HepG2 (cell line): ENCODE measurements at regions of chr5 and their contacts with region 1.

Region 1: DNA sequence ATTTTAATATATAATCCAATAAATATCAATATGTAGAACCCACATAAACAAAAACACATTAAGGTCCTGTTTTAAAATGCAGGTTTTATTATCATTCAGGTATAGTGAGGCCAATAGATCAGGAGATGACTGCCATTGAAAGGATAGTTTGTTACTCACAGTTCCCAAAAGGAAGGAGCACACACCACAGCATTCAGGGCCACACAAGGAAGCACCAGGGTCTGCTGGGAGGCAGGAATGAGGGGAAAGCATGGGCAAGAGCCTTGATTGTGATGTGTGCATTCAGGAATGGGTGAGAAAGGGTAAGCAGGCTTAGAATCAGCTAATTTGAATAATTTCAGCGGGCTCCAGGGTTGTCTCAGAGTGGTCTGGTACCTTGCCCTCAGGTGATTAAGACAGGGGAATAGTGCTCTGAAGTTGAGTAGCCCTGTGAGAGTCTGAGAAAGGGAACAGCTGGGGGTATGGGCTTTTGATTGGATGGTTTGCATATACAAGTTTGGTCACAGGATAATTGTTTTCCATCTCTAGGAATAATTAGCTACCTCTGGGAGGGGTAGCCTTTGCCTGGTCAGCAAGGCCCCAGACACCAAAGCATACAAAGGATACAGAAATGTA is 19.8 kb upstream of the OTULIN start:
- DNase-seq: no peak
- ATAC-seq: no peak
- H3K4me3 ChIP-seq: no peak overlapping the region
- H3K27ac ChIP-seq: no peak overlapping the region
- H3K4me1 ChIP-seq: no peaks in the 10 kb centered on the region
- H3K27me3 ChIP-seq: no peaks in the 10 kb centered on the region; a peak in 1 of 5 replicates
- CTCF ChIP-seq: no peak
- EP300 ChIP-seq: no peak
- POLR2A ChIP-seq: no peak
- RAD21 ChIP-seq: no peak

Region 2: DNA sequence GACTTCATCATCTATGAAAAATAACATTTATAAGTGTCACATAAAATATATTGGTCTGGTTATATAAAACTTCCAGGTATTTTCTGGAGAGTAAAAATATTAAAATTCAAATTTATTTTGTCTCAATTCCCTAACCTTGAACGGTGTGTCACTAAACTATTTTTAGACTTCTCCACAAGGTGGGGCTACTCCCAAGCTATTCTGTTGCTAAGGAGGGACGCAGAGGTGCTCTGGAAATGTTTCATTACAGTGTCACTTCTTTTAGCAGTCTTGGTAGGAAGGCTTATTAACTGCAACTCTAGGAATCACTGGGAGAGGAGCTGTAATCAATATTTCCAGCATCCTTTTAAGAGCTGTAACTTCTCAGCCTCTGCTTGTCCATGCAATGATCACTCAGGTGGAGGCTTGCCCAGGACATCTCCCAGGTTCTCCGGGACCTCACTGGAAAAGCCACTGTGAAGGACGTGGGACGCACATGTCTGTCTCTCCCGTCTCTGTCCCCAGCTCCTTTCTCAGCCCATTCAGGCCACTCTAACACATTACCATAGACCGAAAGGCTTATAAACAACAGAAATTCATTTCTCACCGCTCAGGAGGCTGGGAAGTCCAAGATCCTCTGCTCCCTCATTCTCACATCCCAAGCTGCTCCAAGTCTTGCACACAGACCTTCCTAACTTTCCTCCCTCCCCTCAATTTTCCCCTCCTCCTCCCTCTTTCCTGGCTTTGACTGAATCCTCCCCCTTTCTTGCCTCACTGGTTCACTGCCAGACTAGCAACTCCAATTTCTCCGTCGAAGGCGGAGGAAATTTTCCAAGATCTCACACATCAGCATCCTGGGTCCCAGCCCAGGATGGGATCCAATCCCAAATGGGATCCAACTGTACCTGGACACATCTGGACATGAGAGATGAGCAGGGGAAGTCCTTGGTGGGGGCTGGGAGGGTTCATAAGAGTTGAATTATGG is 667.6 kb before region 1 on chr5:
- CTCF ChIA-PET with region 1: interaction called, 3 read pairs
- POLR2A ChIA-PET with region 1: no interaction called
- in situ Hi-C with region 1: loop called (anchors 10 kb)
- intact Hi-C with region 1: loop called (anchors 2 kb)
- DNase-seq: peak; percentile 15
- ATAC-seq: peak; percentile 91
- H3K4me3 ChIP-seq: no peak overlapping the region
- H3K27ac ChIP-seq: no peak overlapping the region
- H3K4me1 ChIP-seq: no peaks in the 10 kb centered on the region
- H3K27me3 ChIP-seq: peaks cover 0 to 2% of the 10 kb centered on the region in 2 experiments; a peak in 1 of 5 replicates
- CTCF ChIP-seq: peak; percentile 57
- EP300 ChIP-seq: no peak
- POLR2A ChIP-seq: no peak
- RAD21 ChIP-seq: no peak

Region 3: DNA sequence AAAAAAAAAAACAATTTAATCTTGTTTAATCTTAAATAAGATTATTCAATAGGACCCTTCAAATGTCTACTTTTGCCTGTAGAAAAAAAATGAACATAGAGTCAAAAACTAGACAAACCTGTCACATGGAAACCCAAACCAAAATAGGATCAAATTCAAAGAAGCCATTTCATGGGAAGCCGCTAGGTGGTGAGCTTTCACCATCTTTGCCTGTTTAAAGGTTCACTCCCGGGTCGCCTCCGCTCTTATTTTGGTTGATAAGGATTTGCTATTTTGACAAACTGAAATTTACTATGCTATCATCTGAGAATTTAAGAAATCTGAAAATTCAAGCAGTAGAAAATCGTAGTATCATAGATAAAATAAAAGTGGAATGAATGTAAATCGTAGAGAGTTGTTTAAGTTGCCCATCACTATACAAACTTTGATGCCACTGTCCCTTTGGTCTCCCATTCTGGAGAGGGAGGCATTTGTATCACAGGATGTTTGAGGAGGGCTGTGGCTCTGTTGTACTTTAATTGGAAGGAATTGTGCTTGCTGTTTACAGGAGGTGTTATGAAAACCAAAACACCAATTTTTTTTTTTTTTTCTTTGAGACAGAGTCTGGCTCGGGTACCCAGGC is 656.8 kb before region 1 on chr5:
- CTCF ChIA-PET with region 1: no interaction called
- POLR2A ChIA-PET with region 1: no interaction called
- in situ Hi-C with region 1: loop called (anchors 10 kb)
- intact Hi-C with region 1: no loop called
- DNase-seq: peak; percentile 37
- ATAC-seq: peak; percentile 61; the same call in 2 of the 3 replicates
- H3K4me3 ChIP-seq: no peak overlapping the region
- H3K27ac ChIP-seq: no peak overlapping the region
- H3K4me1 ChIP-seq: no peaks in the 10 kb centered on the region
- H3K27me3 ChIP-seq: peaks cover 0 to 4% of the 10 kb centered on the region in 2 experiments; a peak in 1 of 5 replicates
- CTCF ChIP-seq: peak; percentile 76
- EP300 ChIP-seq: no peak
- POLR2A ChIP-seq: no peak
- RAD21 ChIP-seq: peak; percentile 72

Region 4: DNA sequence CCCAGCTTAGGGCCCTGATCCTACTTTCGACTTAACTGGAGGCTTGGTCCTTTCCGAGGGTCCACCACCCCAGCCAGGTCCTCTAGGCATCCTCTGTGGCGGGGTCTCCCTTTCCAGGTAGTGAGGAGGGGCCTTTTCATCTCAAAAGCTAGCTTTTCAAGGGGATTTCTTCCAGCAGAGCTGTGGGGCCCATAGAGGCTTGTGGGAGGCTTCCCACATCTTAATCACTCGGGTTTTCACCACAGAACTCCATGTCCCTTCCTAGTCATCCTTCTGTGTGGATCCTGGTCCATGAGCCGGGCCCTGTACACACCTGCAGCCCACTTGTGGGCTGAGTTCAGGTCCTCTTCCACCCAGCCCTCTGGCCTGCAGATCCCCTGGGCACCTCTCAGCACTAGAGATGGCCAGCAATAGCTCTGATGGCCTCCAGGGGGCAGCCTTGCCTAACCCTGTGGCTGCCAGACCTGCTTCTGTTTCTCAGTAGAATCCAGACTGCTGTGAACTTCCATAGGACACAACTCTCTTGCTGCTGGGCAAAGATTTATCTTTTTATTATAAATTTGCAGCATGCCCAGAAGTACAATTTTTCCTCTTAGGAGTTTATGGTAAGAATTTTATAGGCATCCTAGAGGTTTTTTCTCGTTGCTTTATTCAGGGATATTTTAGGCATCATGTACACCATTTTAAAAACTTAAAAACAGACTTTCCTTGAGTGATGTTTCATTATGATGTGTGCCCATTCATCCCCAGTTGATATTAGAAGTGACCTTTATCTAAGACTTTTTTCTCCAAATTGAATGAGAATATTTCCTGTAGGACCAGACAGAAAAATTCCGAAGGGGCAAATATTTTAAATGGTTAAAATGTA is 292.7 kb before region 1 on chr5:
- CTCF ChIA-PET with region 1: interaction called, 3 read pairs
- POLR2A ChIA-PET with region 1: no interaction called
- in situ Hi-C with region 1: no loop called
- intact Hi-C with region 1: loop called (anchors 1 kb)
- DNase-seq: peak; percentile 35
- ATAC-seq: peak; percentile 98
- H3K4me3 ChIP-seq: no peak overlapping the region
- H3K27ac ChIP-seq: no peak overlapping the region
- H3K4me1 ChIP-seq: no peaks in the 10 kb centered on the region
- H3K27me3 ChIP-seq: no peaks in the 10 kb centered on the region
- CTCF ChIP-seq: peak; percentile 87
- EP300 ChIP-seq: no peak
- POLR2A ChIP-seq: no peak
- RAD21 ChIP-seq: peak; percentile 45

Region 5: DNA sequence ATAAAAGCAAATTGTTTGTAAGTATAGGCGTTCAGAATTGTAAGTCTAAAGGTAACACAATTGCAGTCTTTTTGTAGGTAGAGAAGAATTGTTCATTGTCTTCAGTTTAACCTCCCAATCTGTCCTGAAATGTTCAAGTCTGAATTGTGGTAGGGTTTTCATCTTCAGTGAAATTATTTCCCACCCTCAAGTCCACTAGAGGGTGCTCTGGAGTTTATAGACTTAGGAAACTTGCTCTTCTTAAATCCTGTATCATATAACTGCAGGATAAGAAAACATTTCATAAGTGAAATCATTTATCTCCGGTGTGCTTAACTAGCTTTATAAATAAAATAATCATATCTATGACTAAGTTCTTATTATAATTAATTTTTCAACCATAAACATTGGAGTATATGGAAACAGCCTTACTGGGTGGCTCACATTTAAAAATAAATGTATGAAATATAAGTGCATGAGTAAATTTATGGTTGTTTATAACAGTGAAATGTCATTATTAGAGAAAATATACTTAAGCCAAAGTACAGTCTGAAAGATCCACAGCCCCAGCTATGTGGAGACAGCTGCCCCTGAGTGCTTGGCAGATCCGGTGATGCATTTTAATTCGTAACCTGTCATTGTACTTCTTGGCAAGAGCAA is 245.6 kb before region 1 on chr5:
- CTCF ChIA-PET with region 1: interaction called, 25 read pairs
- POLR2A ChIA-PET with region 1: no interaction called
- in situ Hi-C with region 1: loop called (anchors 5 kb)
- intact Hi-C with region 1: loop called (anchors 1 kb)
- DNase-seq: peak; percentile 28
- ATAC-seq: peak; percentile 63; the same call in 2 of the 3 replicates
- H3K4me3 ChIP-seq: no peak overlapping the region
- H3K27ac ChIP-seq: no peak overlapping the region
- H3K4me1 ChIP-seq: no peaks in the 10 kb centered on the region
- H3K27me3 ChIP-seq: no peaks in the 10 kb centered on the region
- CTCF ChIP-seq: peak; percentile 54
- EP300 ChIP-seq: no peak
- POLR2A ChIP-seq: no peak
- RAD21 ChIP-seq: no peak

Region 6: GRCh38 chr5:15417156-15417555 is 772.4 kb after region 1 on chr5:
- CTCF ChIA-PET with region 1: no interaction called
- POLR2A ChIA-PET with region 1: no interaction called
- in situ Hi-C with region 1: no loop called
- intact Hi-C with region 1: no loop called
- DNase-seq: no peak
- ATAC-seq: no peak
- H3K4me3 ChIP-seq: no peak overlapping the region
- H3K27ac ChIP-seq: no peak overlapping the region
- H3K4me1 ChIP-seq: no peaks in the 10 kb centered on the region
- H3K27me3 ChIP-seq: no peaks in the 10 kb centered on the region
- CTCF ChIP-seq: no peak
- EP300 ChIP-seq: no peak
- POLR2A ChIP-seq: no peak
- RAD21 ChIP-seq: no peak

Region 7: DNA sequence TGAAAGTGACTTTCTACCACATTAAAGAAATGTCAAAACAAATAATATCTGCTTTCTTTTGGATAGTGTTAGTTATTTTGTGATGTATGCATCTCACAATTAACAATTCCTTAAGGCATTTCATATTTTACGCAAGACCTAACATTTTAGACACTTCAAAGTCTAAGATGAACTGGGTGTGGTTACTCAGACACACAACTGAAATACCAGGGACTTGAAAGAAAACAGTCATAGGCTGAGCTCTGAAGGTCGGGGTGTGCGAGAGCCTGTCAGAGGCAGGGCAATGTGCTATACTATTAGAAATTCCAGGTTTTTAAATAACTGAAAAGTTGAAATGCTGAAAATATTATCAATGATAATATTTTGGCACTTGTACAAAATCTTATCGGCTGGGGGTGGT is 1865.4 kb after region 1 on chr5:
- CTCF ChIA-PET with region 1: no interaction called
- POLR2A ChIA-PET with region 1: no interaction called
- in situ Hi-C with region 1: no loop called
- intact Hi-C with region 1: loop called (anchors 5 kb)
- DNase-seq: no peak
- ATAC-seq: no peak
- H3K4me3 ChIP-seq: no peak overlapping the region
- H3K27ac ChIP-seq: no peak overlapping the region
- H3K4me1 ChIP-seq: 0 out of 2 replicates have a peak, but pooled peaks cover 7% of the 10 kb centered on the region
- H3K27me3 ChIP-seq: peaks cover 0 to 8% of the 10 kb centered on the region in 2 experiments; a peak in 2 of 5 replicates
- CTCF ChIP-seq: no peak
- EP300 ChIP-seq: no peak
- POLR2A ChIP-seq: no peak
- RAD21 ChIP-seq: no peak